CD8-positive, alpha-beta T cell (primary cell): ENCODE measurements at regions of chr21 and their contacts with region 1.

Region 1: DNA sequence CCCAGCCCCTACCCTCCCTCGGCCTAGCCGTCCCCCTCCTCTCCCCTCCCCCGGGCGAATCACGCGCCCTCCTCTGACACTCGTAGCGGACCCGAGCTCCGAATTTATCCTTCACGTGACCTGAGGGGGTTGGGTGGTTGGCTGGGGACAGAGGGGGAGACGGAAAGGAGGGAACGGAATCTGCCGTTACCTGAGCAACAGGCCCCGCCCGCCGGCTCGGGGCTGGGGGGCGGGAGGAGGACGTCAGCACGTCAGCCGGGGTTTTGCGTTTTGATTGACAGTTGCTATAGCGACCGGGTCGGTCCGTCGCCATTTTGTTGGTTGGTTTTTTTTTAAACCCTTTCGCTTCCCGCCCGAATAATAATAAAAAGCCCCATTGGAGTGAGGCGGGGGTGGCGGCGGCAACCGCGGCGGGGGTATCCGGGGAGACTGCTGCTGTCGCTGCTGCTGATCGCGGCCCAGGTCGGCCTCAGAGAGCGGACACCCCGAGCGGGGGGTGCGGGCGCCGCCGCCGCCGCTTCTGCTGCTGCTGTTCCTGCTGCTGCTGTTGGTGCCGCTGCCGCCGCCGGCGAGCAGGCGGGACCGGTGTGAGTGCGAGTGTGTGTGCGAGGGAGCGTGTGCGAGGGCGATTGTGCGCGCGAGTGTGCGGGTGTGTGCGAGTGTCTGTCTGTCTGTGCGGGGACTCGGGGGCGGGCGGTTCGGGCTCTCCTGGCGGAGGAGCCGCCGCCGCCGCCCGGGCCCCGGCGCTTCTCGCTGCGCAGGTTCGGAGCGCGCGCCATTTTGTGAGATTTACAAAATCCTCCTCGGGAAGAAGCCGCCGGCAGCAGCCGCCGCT is at the start of gene DYRK1A:
- DNase-seq: peak; percentile 97 to 100 (median 98)
- ATAC-seq: peak; percentile 81
- H3K4me3 ChIP-seq: peak within 1 kb of the TSS; percentile 73 to 86
- H3K4me3 Mint-ChIP-seq: peak within 1 kb of the TSS; percentile 100
- H3K27ac ChIP-seq: peak within 1 kb of the TSS; percentile 92 to 94
- H3K27ac Mint-ChIP-seq: peak within 1 kb of the TSS; percentile 100
- H3K4me1 ChIP-seq: peaks cover 36% of the 10 kb centered on the region
- H3K4me1 Mint-ChIP-seq: peaks cover 50% of the 10 kb centered on the region
- H3K27me3 ChIP-seq: no peaks in the 10 kb centered on the region
- H3K27me3 Mint-ChIP-seq: no peaks in the 10 kb centered on the region
- CTCF ChIP-seq: no peak
- total RNA-seq, gene DYRK1A: 171 to 195 TPM

Region 2: GRCh38 chr21:36060159-36060921 is 1306.4 kb before region 1 on chr21 and contains the start of gene SETD4:
- CTCF ChIA-PET with region 1: no interaction called
- POLR2A ChIA-PET with region 1: no interaction called
- intact Hi-C with region 1: loop called (anchors 5 to 10 kb)
- DNase-seq: peak; percentile 80 to 97 (median 92)
- ATAC-seq: peak; percentile 87
- H3K4me3 ChIP-seq: peak within 1 kb of the TSS; percentile 88 to 99
- H3K4me3 Mint-ChIP-seq: peak within 1 kb of the TSS; percentile 96
- H3K27ac ChIP-seq: peak within 1 kb of the TSS; percentile 69 to 90
- H3K27ac Mint-ChIP-seq: peak within 1 kb of the TSS; percentile 98
- H3K4me1 ChIP-seq: peaks cover 4% of the 10 kb centered on the region
- H3K4me1 Mint-ChIP-seq: peaks cover 27% of the 10 kb centered on the region
- H3K27me3 ChIP-seq: no peaks in the 10 kb centered on the region
- H3K27me3 Mint-ChIP-seq: no peaks in the 10 kb centered on the region
- CTCF ChIP-seq: no peak
- total RNA-seq, gene SETD4: 13.9 to 15.4 TPM

Region 3: GRCh38 chr21:37220981-37221664 is 145.6 kb before region 1 on chr21:
- CTCF ChIA-PET with region 1: no interaction called
- POLR2A ChIA-PET with region 1: interaction called, 3 read pairs
- intact Hi-C with region 1: loop called (anchors 1 kb)
- DNase-seq: peak; percentile 82 to 96 (median 95)
- ATAC-seq: peak; percentile 79
- H3K4me3 ChIP-seq: peak overlapping the region; percentile 92
- H3K4me3 Mint-ChIP-seq: peak overlapping the region; percentile 81
- H3K27ac ChIP-seq: peak overlapping the region; percentile 82
- H3K27ac Mint-ChIP-seq: peak overlapping the region; percentile 93
- H3K4me1 ChIP-seq: peaks cover 42% of the 10 kb centered on the region
- H3K4me1 Mint-ChIP-seq: peaks cover 50% of the 10 kb centered on the region
- H3K27me3 ChIP-seq: no peaks in the 10 kb centered on the region
- H3K27me3 Mint-ChIP-seq: no peaks in the 10 kb centered on the region
- CTCF ChIP-seq: peak; percentile 53

Region 4: DNA sequence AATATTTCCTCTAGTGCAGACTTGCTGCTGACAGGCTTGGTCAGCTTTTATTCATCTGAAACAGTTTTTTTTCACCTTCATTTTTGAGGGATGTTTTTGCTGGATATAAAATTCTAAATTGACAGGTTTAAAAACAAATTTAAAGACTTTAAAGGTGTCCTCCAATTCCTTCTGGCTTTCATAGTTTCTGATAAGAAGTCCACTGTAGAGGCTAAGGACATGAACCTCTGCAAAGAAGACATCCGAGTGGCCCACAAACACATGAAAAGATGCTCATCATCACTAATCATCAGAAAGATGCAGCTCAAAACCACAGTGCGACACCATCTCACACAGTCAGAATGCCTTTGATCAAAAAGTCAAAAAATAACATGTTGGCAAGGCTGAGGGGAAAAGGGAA is 42.1 kb before region 1 on chr21:
- CTCF ChIA-PET with region 1: no interaction called
- POLR2A ChIA-PET with region 1: no interaction called
- intact Hi-C with region 1: no loop called
- DNase-seq: no peak
- ATAC-seq: no peak
- H3K4me3 ChIP-seq: no peak overlapping the region
- H3K4me3 Mint-ChIP-seq: no peak overlapping the region
- H3K27ac ChIP-seq: no peak overlapping the region
- H3K27ac Mint-ChIP-seq: no peak overlapping the region
- H3K4me1 ChIP-seq: no peaks in the 10 kb centered on the region
- H3K4me1 Mint-ChIP-seq: no peaks in the 10 kb centered on the region
- H3K27me3 ChIP-seq: no peaks in the 10 kb centered on the region
- H3K27me3 Mint-ChIP-seq: no peaks in the 10 kb centered on the region
- CTCF ChIP-seq: no peak

Region 5: GRCh38 chr21:37383086-37383485 is 16.4 kb after region 1 on chr21:
- CTCF ChIA-PET with region 1: no interaction called
- POLR2A ChIA-PET with region 1: interaction called, 4 read pairs
- intact Hi-C with region 1: loop called in 1 of 2 experiments (anchors 2 kb)
- DNase-seq: no peak
- ATAC-seq: no peak
- H3K4me3 ChIP-seq: no peak overlapping the region
- H3K4me3 Mint-ChIP-seq: peak overlapping the region; percentile 23
- H3K27ac ChIP-seq: no peak overlapping the region
- H3K27ac Mint-ChIP-seq: no peak overlapping the region
- H3K4me1 ChIP-seq: peaks cover 87% of the 10 kb centered on the region
- H3K4me1 Mint-ChIP-seq: peaks cover 92% of the 10 kb centered on the region
- H3K27me3 ChIP-seq: no peaks in the 10 kb centered on the region
- H3K27me3 Mint-ChIP-seq: no peaks in the 10 kb centered on the region
- CTCF ChIP-seq: no peak

Region 6: GRCh38 chr21:37463083-37463801 is 96.5 kb after region 1 on chr21:
- CTCF ChIA-PET with region 1: interaction called, 8 read pairs
- POLR2A ChIA-PET with region 1: interaction called, 3 read pairs
- intact Hi-C with region 1: loop called (anchors 1 to 2 kb)
- DNase-seq: peak in 2 of 9 experiments; percentile 53 to 67
- ATAC-seq: peak; percentile 69
- H3K4me3 ChIP-seq: no peak overlapping the region
- H3K4me3 Mint-ChIP-seq: peak overlapping the region; percentile 30
- H3K27ac ChIP-seq: peak overlapping the region in 1 of 2 experiments; percentile 14
- H3K27ac Mint-ChIP-seq: peak overlapping the region; percentile 86
- H3K4me1 ChIP-seq: peaks cover 61% of the 10 kb centered on the region
- H3K4me1 Mint-ChIP-seq: peaks cover 88% of the 10 kb centered on the region
- H3K27me3 ChIP-seq: no peaks in the 10 kb centered on the region
- H3K27me3 Mint-ChIP-seq: no peaks in the 10 kb centered on the region
- CTCF ChIP-seq: peak; percentile 50

Region 7: GRCh38 chr21:39183237-39184007 is 1816.7 kb after region 1 on chr21 and contains the start of gene PSMG1:
- CTCF ChIA-PET with region 1: no interaction called
- POLR2A ChIA-PET with region 1: interaction called, 5 read pairs
- intact Hi-C with region 1: loop called in 1 of 2 experiments (anchors 10 kb)
- DNase-seq: peak; percentile 86 to 97 (median 93)
- ATAC-seq: peak; percentile 92
- H3K4me3 ChIP-seq: peak within 1 kb of the TSS; percentile 88 to 89
- H3K4me3 Mint-ChIP-seq: peak within 1 kb of the TSS; percentile 97
- H3K27ac ChIP-seq: peak within 1 kb of the TSS; percentile 73 to 91
- H3K27ac Mint-ChIP-seq: peak within 1 kb of the TSS; percentile 94
- H3K4me1 ChIP-seq: peaks cover 27% of the 10 kb centered on the region
- H3K4me1 Mint-ChIP-seq: peaks cover 42% of the 10 kb centered on the region
- H3K27me3 ChIP-seq: no peaks in the 10 kb centered on the region
- H3K27me3 Mint-ChIP-seq: no peaks in the 10 kb centered on the region
- CTCF ChIP-seq: no peak
- total RNA-seq, gene PSMG1: 4.7 to 6.8 TPM